SK-N-SH (cell line): ENCODE measurements at regions of chr19 and their contacts with region 1.

Region 1: DNA sequence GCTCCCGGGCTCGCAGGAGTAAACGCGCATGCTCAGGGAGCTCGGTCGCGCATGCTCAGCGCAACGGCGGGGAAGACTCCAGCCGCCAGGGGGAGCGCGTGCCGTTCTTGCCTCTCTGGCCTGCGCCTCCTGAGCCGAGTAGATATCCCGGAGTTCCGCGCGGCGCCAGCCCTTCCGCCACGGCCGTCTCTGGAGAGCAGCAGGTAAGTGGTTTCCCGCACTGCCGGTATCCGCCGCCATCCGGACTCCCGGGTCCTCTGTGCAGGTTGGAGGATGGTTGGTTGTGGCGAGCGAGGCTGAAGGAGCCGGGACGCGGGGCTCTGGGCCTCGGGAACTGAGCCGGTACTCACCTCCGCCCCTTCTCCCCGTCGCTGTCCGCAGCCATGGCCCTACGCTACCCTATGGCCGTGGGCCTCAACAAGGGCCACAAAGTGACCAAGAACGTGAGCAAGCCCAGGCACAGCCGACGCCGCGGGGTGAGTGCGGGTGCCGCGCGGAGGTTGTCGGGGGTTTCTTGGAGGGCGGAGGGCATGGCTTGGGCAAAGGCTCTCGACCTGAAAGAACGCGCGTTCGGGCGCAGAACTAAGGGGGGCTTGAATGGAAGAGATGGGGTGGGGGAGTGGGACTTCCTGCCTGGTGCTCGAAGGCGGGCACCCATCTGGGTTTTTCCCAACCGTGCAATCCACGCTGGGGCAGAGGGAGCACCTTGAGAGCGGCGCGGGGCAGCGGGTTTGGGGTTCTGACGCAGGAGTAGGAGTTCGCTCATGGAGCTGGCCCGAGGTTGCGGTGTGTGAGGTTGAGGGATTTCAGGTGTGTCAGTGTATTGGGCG is at the start of gene RPL36:
- DNase-seq: peak; percentile 94
- H3K4me3 ChIP-seq: peak within 1 kb of the TSS; percentile 97
- H3K27ac ChIP-seq: peak within 1 kb of the TSS; percentile 83 to 93
- H3K4me1 ChIP-seq: peaks cover 0 to 27% of the 10 kb centered on the region in 2 experiments; a peak in 1 of 4 replicates
- H3K27me3 ChIP-seq: no peaks in the 10 kb centered on the region
- CTCF ChIP-seq: peak; percentile 79
- EP300 ChIP-seq: no peak
- RAD21 ChIP-seq: no peak
- polyA plus RNA-seq, gene RPL36: 871 and 1,383 TPM in 2 replicates

Region 2: GRCh38 chr19:5536337-5536894 is 153.9 kb before region 1 on chr19:
- CTCF ChIA-PET with region 1: no interaction called
- POLR2A ChIA-PET with region 1: no interaction called
- DNase-seq: peak; percentile 83
- H3K4me3 ChIP-seq: no peak overlapping the region
- H3K27ac ChIP-seq: no peak overlapping the region
- H3K4me1 ChIP-seq: no peaks in the 10 kb centered on the region; a peak in 1 of 4 replicates
- H3K27me3 ChIP-seq: no peaks in the 10 kb centered on the region
- CTCF ChIP-seq: no peak
- EP300 ChIP-seq: no peak
- RAD21 ChIP-seq: no peak

Region 3: GRCh38 chr19:5563941-5564612 is 126.3 kb before region 1 on chr19:
- CTCF ChIA-PET with region 1: no interaction called
- POLR2A ChIA-PET with region 1: no interaction called
- DNase-seq: peak; percentile 60
- H3K4me3 ChIP-seq: no peak overlapping the region
- H3K27ac ChIP-seq: no peak overlapping the region
- H3K4me1 ChIP-seq: no peaks in the 10 kb centered on the region; a peak in 1 of 4 replicates
- H3K27me3 ChIP-seq: peaks cover 28% of the 10 kb centered on the region
- CTCF ChIP-seq: no peak
- EP300 ChIP-seq: no peak
- RAD21 ChIP-seq: no peak

Region 4: DNA sequence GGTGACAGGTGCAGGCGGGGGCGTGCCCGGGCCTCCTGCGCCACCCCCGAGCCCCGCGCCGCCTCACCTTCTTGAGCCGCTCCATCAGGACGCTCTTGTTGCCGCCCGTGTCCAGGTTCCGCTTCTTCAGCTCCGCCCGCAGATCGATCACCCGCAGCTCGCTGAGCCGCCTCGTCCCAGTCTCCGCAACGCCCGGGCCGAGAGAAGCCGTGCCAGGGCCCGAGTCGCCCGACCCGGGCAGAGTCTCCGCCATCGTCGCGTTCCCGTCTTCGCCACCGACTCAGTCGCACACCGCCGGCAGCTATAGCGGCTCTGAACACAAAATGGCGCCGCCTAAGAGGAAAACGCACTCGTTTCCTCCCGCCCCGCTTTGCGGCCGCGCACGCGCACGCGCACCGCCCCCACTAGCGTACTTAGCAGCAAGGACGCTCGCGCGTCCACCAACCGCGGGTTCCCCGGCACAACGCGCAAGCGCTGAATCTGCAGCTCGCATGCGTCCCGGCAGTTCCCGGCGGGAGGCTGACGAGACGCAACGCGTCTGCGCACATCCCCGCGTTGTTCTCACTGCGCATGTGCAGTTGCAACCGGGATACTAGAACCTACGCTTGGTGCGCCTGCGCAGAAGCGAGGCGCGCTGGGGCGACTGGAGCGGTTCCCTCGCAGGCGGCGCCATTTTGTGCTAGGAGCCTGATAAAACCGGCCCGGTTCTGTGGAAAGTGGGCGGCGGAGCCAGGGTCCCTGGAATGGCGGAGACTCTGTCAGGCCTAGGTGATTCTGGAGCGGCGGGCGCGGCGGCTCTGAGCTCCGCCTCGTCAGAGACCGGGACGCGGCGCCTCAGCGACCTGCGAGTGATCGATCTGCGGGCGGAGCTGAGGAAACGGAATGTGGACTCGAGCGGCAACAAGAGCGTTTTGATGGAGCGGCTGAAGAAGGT is 67.6 kb before region 1 on chr19 and contains the starts of genes SAFB and SAFB2:
- CTCF ChIA-PET with region 1: interaction called, 14 read pairs
- POLR2A ChIA-PET with region 1: interaction called, 5 read pairs
- DNase-seq: peak; percentile 99
- H3K4me3 ChIP-seq: peak within 1 kb of the TSS; percentile 93 to 98
- H3K27ac ChIP-seq: peak within 1 kb of the TSS; percentile 92
- H3K4me1 ChIP-seq: peaks cover 10 to 34% of the 10 kb centered on the region in 2 experiments; a peak in 3 of 4 replicates
- H3K27me3 ChIP-seq: no peaks in the 10 kb centered on the region
- CTCF ChIP-seq: no peak
- EP300 ChIP-seq: no peak
- RAD21 ChIP-seq: no peak
- polyA plus RNA-seq, gene SAFB: 44.4 and 90.0 TPM in 2 replicates
- polyA plus RNA-seq, gene SAFB2: 20.3 and 37.7 TPM in 2 replicates

Region 5: DNA sequence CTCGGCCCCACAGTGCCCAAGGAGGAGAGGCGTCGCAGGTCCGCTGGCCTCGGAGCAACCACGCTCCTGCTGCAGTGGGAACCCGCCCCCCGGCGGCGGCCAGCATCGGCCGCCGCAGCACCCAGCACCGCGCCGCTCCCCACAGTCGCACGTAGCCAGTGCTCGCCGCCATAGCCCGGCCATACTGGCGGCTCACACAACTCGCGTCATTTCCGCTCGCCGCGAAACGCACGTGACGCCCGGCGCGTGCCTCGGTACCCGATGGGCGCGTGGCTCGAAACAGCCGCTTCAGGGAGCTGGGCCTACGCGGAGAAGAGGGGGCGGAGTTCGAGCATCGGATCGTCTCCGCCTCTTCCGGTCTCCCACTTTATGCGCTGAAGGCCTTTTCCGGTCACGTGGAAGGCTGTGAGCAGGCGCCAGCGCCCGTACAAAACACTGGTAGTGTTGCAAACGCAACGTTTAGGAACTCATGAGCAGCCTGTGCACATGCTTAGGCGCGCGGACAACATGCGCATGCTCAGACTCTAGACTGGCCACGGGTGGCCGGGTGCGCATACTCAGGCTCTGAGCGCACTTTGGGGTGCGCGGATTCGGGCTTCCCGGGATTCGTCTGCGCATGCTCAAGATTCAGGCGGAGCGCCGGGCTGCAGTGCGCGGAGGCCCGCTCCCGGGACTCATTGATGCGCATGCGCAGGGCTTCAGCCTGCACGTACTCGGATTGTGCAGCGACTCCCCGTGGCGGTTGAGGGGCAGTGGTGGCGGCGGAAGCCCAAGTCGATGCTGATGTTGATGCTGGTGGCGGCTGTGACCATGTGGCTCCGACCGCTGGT is 29.8 kb after region 1 on chr19 and contains the starts of genes CATSPERD and LONP1:
- CTCF ChIA-PET with region 1: interaction called, 31 read pairs
- POLR2A ChIA-PET with region 1: interaction called, 12 read pairs
- DNase-seq: peak; percentile 99
- H3K4me3 ChIP-seq: peak within 1 kb of the TSS; percentile 84 to 95
- H3K27ac ChIP-seq: peak within 1 kb of the TSS; percentile 90 to 97
- H3K4me1 ChIP-seq: peaks cover 10 to 13% of the 10 kb centered on the region in 2 experiments; a peak in 3 of 4 replicates
- H3K27me3 ChIP-seq: no peaks in the 10 kb centered on the region; the same call in 1 of the 2 replicates
- CTCF ChIP-seq: peak; percentile 84
- EP300 ChIP-seq: no peak
- RAD21 ChIP-seq: peak; percentile 41
- polyA plus RNA-seq, gene CATSPERD: not detected in 2 replicates
- polyA plus RNA-seq, gene LONP1: 75.4 and 111 TPM in 2 replicates

Region 6: GRCh38 chr19:5798244-5798643 is 107.9 kb after region 1 on chr19:
- CTCF ChIA-PET with region 1: no interaction called
- POLR2A ChIA-PET with region 1: no interaction called
- DNase-seq: no peak
- H3K4me3 ChIP-seq: no peak overlapping the region
- H3K27ac ChIP-seq: no peak overlapping the region
- H3K4me1 ChIP-seq: peaks cover 0 to 28% of the 10 kb centered on the region in 2 experiments; a peak in 1 of 4 replicates
- H3K27me3 ChIP-seq: no peaks in the 10 kb centered on the region; the same call in 1 of the 2 replicates
- CTCF ChIP-seq: no peak
- EP300 ChIP-seq: no peak
- RAD21 ChIP-seq: no peak

Region 7: DNA sequence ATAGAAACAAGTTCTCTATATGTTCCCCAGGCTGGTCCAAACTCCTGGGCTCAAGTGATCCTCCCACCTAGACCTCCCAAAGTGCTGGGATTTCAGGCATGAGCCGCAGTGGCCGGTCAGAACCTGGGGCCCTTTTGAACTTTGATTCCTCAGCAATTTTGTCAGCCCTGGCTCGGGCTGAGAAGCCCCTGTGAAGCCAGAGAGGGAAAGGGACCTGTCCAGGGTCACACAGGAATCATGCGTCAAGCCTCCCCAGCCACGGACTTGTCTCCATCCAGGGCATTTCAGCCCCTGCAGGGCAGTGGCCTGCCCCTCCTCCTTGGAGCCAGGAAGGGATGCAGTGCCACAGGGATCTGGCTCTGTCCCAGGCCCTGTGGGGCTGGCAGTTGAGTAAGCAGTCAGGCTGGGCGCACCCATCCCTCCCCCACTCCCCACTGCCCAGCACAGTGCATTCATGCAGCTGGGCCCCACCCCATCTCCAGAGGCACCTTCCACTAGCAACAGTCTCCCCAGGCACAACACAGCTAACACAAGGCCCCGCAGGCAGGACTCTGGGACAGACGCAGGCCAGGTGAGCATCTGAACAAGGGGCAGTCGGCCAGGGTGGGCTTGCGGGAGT is 223.5 kb after region 1 on chr19 and contains the start of gene CAPS:
- CTCF ChIA-PET with region 1: no interaction called
- POLR2A ChIA-PET with region 1: no interaction called
- DNase-seq: no peak
- H3K4me3 ChIP-seq: no peak within 1 kb of the TSS
- H3K27ac ChIP-seq: peak within 1 kb of the TSS in 1 of 2 experiments; percentile 32; a peak in 2 of 4 replicates
- H3K4me1 ChIP-seq: peaks cover 4 to 5% of the 10 kb centered on the region in 2 experiments; a peak in 2 of 4 replicates
- H3K27me3 ChIP-seq: no peaks in the 10 kb centered on the region
- CTCF ChIP-seq: no peak
- EP300 ChIP-seq: no peak
- RAD21 ChIP-seq: no peak
- polyA plus RNA-seq, gene CAPS: 13.4 and 17.3 TPM in 2 replicates